ENCODE measurements at regions of chr2 and their contacts with region 1.

Region 1: GRCh38 chr2:172931918-172932520 is 143.6 kb upstream of the MAP3K20 start:
- DNase-seq: no peak
- H3K4me3 ChIP-seq: no peak overlapping the region
- H3K27ac ChIP-seq: no peak overlapping the region
- H3K4me1 ChIP-seq: peaks cover 4% of the 10 kb centered on the region
- H3K27me3 ChIP-seq: no peaks in the 10 kb centered on the region
- CTCF ChIP-seq: peak; percentile 68 to 77

Region 2: DNA sequence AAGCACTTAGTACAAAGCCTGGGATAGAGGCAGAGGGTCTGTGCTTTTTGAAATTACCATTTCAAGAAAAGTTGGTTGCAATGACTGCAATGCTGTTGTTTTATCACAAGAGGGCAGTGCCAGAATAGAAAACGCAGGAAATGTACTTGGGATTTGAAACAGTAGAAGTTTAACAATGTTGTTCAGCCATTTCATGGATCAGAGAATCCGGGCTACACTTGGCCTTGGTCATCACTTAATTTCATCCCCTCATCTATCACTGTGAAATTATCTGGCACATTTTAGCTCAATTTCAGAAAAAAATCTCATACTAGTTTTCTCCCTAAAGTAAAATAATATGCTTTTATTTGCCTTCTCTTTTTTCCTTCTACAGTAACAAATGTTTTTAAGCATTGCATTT is 125.5 kb before region 1 on chr2:
- CTCF ChIA-PET with region 1: interaction called, 3 read pairs
- dilution Hi-C with region 1: no loop called
- in situ Hi-C with region 1: loop called (anchors 5 kb)
- intact Hi-C with region 1: loop called (anchors 1 kb)
- DNase-seq: no peak
- H3K4me3 ChIP-seq: no peak overlapping the region
- H3K27ac ChIP-seq: no peak overlapping the region
- H3K4me1 ChIP-seq: peaks cover 9% of the 10 kb centered on the region
- H3K27me3 ChIP-seq: no peaks in the 10 kb centered on the region
- CTCF ChIP-seq: peak; percentile 90 to 96

Region 3: DNA sequence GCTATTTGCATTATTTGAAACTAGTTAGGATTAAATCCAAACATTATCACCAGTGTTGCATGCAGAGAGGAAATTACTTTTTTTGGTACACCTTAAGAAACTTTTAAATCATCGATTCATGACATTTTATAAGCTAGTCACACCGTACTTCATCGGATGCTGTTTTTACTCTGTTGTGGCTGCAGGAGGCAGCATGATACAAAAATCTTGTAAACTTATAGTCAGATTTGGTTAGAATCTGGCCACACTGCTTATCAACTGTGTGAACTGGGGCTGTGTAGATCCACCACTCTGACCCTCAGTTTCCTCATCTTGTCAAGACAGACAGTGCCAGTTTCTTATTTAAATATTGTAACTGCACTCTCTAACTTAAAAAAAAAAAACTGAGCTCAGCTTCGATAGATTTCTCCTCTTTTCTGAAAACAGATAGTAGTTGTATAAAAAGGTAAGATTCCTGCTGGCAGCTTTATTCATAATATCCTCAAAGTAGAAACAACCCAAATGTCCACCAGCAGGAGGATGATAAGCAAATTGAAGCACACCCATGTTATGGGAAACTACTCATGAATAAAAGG is 118.6 kb before region 1 on chr2:
- CTCF ChIA-PET with region 1: interaction called, 9 read pairs
- dilution Hi-C with region 1: no loop called
- in situ Hi-C with region 1: loop called (anchors 5 kb)
- intact Hi-C with region 1: loop called (anchors 1 kb)
- DNase-seq: no peak
- H3K4me3 ChIP-seq: no peak overlapping the region
- H3K27ac ChIP-seq: no peak overlapping the region
- H3K4me1 ChIP-seq: no peaks in the 10 kb centered on the region
- H3K27me3 ChIP-seq: no peaks in the 10 kb centered on the region
- CTCF ChIP-seq: peak; percentile 46 to 65

Region 4: GRCh38 chr2:172829229-172829628 is 102.8 kb before region 1 on chr2:
- CTCF ChIA-PET with region 1: no interaction called
- dilution Hi-C with region 1: no loop called
- in situ Hi-C with region 1: no loop called
- intact Hi-C with region 1: no loop called
- DNase-seq: peak; percentile 34
- H3K4me3 ChIP-seq: no peak overlapping the region
- H3K27ac ChIP-seq: no peak overlapping the region
- H3K4me1 ChIP-seq: no peaks in the 10 kb centered on the region
- H3K27me3 ChIP-seq: no peaks in the 10 kb centered on the region
- CTCF ChIP-seq: no peak

Region 5: GRCh38 chr2:172888714-172889669 is 43.0 kb before region 1 on chr2:
- CTCF ChIA-PET with region 1: no interaction called
- dilution Hi-C with region 1: no loop called
- in situ Hi-C with region 1: no loop called
- intact Hi-C with region 1: no loop called
- DNase-seq: no peak
- H3K4me3 ChIP-seq: no peak overlapping the region
- H3K27ac ChIP-seq: no peak overlapping the region
- H3K4me1 ChIP-seq: no peaks in the 10 kb centered on the region
- H3K27me3 ChIP-seq: peaks cover 2% of the 10 kb centered on the region
- CTCF ChIP-seq: no peak

Measured in mammary epithelial cell (primary cell).